Activated CD4-positive, alpha-beta T cell treated with anti-CD3 and anti-CD28 coated beads for 36 hours (primary cell): ENCODE measurements at regions of chr3 and their contacts with region 1.

Region 1: DNA sequence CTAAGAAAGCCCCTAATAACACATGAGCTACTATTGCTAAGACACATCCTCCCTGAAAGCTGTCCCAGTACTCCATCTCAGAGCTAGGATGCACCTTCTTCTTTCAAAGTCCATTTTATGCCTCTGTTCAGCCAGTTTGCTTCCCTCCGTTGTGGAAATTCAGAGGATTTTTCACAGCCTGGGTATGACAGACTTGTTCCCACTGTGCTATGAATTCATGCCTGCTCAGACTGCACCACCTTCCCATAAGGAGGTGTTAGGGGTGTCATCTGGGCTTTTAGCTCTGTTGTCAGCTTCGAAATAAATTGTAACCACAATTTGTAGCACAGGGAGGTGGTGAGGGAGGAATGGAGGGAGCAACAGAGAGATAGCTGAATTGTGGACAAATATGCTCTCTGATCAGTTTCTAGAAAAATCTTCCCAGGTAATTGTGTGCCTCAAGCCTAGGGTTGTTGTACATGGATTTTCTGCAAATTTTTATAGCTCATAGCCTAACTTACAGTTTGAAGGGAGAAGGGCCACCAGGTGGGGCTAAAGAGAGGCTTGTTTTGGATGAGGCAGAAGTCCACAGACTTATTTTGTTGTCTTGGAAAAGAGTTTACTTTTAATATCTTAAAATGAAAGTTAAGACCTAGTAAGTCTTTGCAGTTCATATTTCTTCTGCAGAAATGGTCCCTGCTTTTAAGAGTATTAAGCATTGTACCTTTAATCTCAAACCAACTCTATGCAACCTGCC is 462.0 kb downstream of the PDCD6IP start:
- DNase-seq: peak; percentile 73
- ATAC-seq: no peak
- H3K4me3 Mint-ChIP-seq: no peak overlapping the region
- H3K27ac Mint-ChIP-seq: no peak overlapping the region
- H3K4me1 Mint-ChIP-seq: peaks cover 17% of the 10 kb centered on the region
- H3K27me3 Mint-ChIP-seq: peaks cover 8% of the 10 kb centered on the region

Region 2: GRCh38 chr3:34727680-34728079 is 467.2 kb after region 1 on chr3:
- CTCF ChIA-PET with region 1: no interaction called
- POLR2A ChIA-PET with region 1: no interaction called
- intact Hi-C with region 1: loop called in 1 of 2 experiments (anchors 5 kb)
- DNase-seq: no peak
- ATAC-seq: peak; percentile 60
- H3K4me3 Mint-ChIP-seq: no peak overlapping the region
- H3K27ac Mint-ChIP-seq: no peak overlapping the region
- H3K4me1 Mint-ChIP-seq: no peaks in the 10 kb centered on the region
- H3K27me3 Mint-ChIP-seq: peaks cover 5% of the 10 kb centered on the region